PC-3 (cell line): ENCODE measurements at regions of chr4 and their contacts with region 1.

Region 1: GRCh38 chr4:13654158-13654797 is 26.8 kb upstream of the BOD1L1 start:
- DNase-seq: peak; percentile 77
- ATAC-seq: peak; percentile 86
- H3K4me3 ChIP-seq: peak overlapping the region; percentile 73
- H3K27ac ChIP-seq: peak overlapping the region; percentile 84
- H3K4me1 ChIP-seq: peaks cover 33% of the 10 kb centered on the region
- H3K27me3 ChIP-seq: no peaks in the 10 kb centered on the region
- CTCF ChIP-seq: peak; percentile 67

Region 2: GRCh38 chr4:13865871-13866669 is 211.8 kb after region 1 on chr4:
- CTCF ChIA-PET with region 1: no interaction called
- POLR2A ChIA-PET with region 1: no interaction called
- intact Hi-C with region 1: loop called (anchors 5 kb)
- DNase-seq: peak; percentile 63
- ATAC-seq: peak; percentile 74
- H3K4me3 ChIP-seq: no peak overlapping the region
- H3K27ac ChIP-seq: peak overlapping the region; percentile 44
- H3K4me1 ChIP-seq: peaks cover 12% of the 10 kb centered on the region
- H3K27me3 ChIP-seq: no peaks in the 10 kb centered on the region
- CTCF ChIP-seq: no peak

Region 3: DNA sequence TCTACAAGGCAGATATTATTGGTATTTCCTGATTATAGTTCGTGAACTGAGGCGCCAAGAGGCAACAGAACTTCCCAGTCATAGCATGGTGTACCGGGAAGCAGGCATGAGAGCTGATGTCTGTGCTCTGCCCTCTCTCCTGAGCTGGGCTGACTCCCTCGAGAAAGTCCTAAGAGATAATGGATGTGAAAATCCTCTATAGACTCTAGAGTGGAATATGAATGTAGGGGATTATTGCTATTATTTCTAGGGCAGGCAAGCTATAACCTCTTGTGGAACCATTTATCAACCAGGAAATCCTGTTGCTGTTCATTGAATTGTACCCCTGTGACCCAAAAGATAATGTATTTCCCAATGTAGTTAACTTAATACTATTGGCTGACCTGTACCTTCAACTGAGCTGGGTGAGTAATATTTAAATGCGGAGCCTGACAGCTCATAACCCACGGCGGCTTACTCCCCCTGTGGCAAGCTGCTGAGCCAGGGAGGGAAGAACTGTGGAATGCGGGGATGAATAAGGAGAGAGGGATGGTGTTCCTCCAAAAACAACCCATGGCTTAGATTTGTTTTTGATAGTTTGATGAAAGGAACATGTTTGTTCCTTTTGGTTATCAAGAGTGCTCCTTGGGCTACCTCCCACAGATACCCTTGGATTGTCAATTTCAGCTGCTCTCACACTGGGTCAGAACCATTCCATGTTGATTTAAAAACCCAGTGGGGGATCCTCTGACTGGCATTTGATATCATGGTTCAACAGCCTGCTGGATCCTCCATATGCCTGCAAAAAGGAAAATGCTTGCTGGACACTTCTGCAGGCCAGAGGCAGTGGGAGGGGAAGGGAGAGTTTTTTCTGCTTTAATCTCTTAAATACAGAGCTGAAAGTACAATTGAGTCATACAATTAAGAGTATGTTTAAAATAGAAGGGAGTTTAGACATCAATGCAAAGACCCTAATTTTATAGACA is 312.2 kb after region 1 on chr4:
- CTCF ChIA-PET with region 1: no interaction called
- POLR2A ChIA-PET with region 1: no interaction called
- intact Hi-C with region 1: loop called (anchors 2 kb)
- DNase-seq: peak; percentile 72
- ATAC-seq: peak; percentile 92
- H3K4me3 ChIP-seq: no peak overlapping the region
- H3K27ac ChIP-seq: peak overlapping the region; percentile 54
- H3K4me1 ChIP-seq: peaks cover 26% of the 10 kb centered on the region
- H3K27me3 ChIP-seq: no peaks in the 10 kb centered on the region
- CTCF ChIP-seq: no peak; the same call in 1 of the 2 replicates

Region 4: GRCh38 chr4:14184265-14184664 is 530.0 kb after region 1 on chr4:
- CTCF ChIA-PET with region 1: no interaction called
- POLR2A ChIA-PET with region 1: no interaction called
- intact Hi-C with region 1: loop called (anchors 5 kb)
- DNase-seq: no peak
- ATAC-seq: no peak
- H3K4me3 ChIP-seq: no peak overlapping the region
- H3K27ac ChIP-seq: no peak overlapping the region
- H3K4me1 ChIP-seq: peaks cover 23% of the 10 kb centered on the region
- H3K27me3 ChIP-seq: no peaks in the 10 kb centered on the region
- CTCF ChIP-seq: no peak

Region 5: DNA sequence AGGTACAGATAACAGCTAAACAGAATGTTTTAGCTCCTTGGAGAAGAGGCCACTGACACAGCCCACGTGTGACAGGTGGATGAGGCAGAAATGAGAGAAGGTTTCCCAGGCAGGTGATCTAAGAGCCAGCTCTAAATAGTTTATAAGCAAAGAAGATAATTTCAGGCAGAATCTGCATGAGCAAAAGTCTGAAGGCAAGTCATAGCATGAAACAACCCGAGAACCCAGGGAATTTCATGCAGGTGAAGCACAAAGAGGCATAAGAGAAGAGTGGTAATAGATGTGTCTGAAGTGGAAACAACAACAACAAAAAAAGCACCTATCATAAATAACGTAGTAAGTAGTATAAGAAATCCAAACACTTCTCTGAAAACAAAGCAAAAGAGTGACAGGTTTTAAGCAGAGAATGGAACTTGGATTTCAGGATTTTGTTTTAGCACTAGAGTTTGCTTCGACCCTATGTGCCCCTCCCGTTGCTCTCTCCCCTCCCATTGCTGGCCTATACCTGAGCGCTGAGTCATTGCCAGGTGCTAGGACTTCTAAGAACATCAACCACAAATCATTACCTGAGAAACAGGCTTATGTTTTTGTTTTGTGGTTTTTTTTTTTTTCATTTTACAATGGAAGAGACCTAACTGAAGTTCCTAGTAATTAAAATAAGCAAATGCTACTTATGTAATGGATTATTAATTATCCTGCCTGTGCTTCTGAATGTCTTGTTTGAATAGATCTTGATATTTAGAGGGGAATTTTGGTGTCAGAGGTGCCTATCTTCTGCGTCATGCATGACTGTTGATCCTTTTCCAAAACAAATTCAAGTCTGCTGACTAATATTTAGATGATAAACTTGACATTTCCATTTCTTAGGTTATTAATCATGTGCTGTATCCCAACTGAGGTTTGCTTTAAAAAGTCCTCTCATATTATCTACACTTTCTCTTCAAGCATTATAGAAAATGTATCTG is 1072.4 kb after region 1 on chr4:
- CTCF ChIA-PET with region 1: no interaction called
- POLR2A ChIA-PET with region 1: no interaction called
- intact Hi-C with region 1: loop called (anchors 10 kb)
- DNase-seq: peak; percentile 82
- ATAC-seq: peak; percentile 76
- H3K4me3 ChIP-seq: peak overlapping the region; percentile 40; the same call in 1 of the 2 replicates
- H3K27ac ChIP-seq: peak overlapping the region; percentile 89
- H3K4me1 ChIP-seq: peaks cover 12% of the 10 kb centered on the region
- H3K27me3 ChIP-seq: no peaks in the 10 kb centered on the region
- CTCF ChIP-seq: no peak

Region 6: GRCh38 chr4:15162465-15163283 is 1508.4 kb after region 1 on chr4:
- CTCF ChIA-PET with region 1: no interaction called
- POLR2A ChIA-PET with region 1: no interaction called
- intact Hi-C with region 1: loop called (anchors 10 kb)
- DNase-seq: peak; percentile 36
- ATAC-seq: peak; percentile 58
- H3K4me3 ChIP-seq: no peak overlapping the region
- H3K27ac ChIP-seq: no peak overlapping the region
- H3K4me1 ChIP-seq: peaks cover 17% of the 10 kb centered on the region
- H3K27me3 ChIP-seq: no peaks in the 10 kb centered on the region
- CTCF ChIP-seq: peak; percentile 60